Calu3 (cell line): ENCODE measurements at regions of chr2 and their contacts with region 1.

Region 1: GRCh38 chr2:18762667-18763066 is 173.3 kb upstream of the NT5C1B start:
- DNase-seq: no peak
- H3K4me3 Mint-ChIP-seq: no peak overlapping the region
- H3K27ac Mint-ChIP-seq: no peak overlapping the region
- H3K4me1 Mint-ChIP-seq: no peaks in the 10 kb centered on the region
- H3K27me3 Mint-ChIP-seq: no peaks in the 10 kb centered on the region
- CTCF ChIP-seq: no peak

Region 2: GRCh38 chr2:18804536-18804935 is 41.9 kb after region 1 on chr2:
- CTCF ChIA-PET with region 1: no interaction called
- intact Hi-C with region 1: loop called (anchors 1 kb)
- DNase-seq: no peak
- H3K4me3 Mint-ChIP-seq: no peak overlapping the region
- H3K27ac Mint-ChIP-seq: no peak overlapping the region
- H3K4me1 Mint-ChIP-seq: no peaks in the 10 kb centered on the region
- H3K27me3 Mint-ChIP-seq: no peaks in the 10 kb centered on the region
- CTCF ChIP-seq: no peak